ENCODE measurements at regions of chr1 and their contacts with region 1.

Region 1: GRCh38 chr1:31548907-31549808 is 27.2 kb upstream of the TINAGL1 start:
- DNase-seq: peak; percentile 84
- ATAC-seq: peak; percentile 95
- H3K4me3 ChIP-seq: peak overlapping the region; percentile 35 to 53
- H3K27ac ChIP-seq: peak overlapping the region; percentile 3; the same call in 1 of the 2 replicates
- H3K4me1 ChIP-seq: peaks cover 3% of the 10 kb centered on the region; the same call in 1 of the 2 replicates
- H3K27me3 ChIP-seq: no peaks in the 10 kb centered on the region
- CTCF ChIP-seq: peak; percentile 95

Region 2: DNA sequence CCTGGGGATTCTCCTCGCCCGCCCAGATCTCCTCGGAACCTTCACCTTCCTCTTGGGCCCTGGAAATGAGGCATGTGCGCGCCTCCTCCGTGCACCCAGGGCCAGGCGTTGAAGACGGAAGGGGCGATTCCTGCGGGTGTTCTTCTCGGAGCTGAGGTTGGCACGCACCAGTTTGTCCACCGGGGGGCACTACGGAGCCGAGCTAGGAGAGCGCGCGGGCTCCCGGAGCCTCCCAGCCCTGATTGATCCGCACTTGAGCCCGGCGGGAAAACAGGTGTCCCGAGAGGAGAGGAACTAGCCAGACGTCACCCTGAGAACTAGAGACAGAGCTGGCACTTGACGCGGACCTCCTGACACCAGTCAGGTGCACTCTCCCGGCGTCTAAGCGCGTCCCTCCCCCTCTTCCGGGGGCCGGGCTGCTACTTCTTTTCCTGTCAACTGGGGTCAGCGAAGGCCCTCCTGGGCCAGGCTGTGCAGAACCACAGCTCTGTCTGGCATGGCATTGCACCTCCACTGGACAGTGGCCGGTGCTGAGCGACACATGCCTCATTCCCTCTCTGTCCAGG is 154.4 kb before region 1 on chr1:
- CTCF ChIA-PET with region 1: interaction called, 17 read pairs
- POLR2A ChIA-PET with region 1: no interaction called
- in situ Hi-C with region 1: no loop called
- intact Hi-C with region 1: loop called (anchors 2 kb)
- DNase-seq: peak; percentile 55
- ATAC-seq: peak; percentile 94
- H3K4me3 ChIP-seq: peak overlapping the region; percentile 33 to 61
- H3K27ac ChIP-seq: no peak overlapping the region
- H3K4me1 ChIP-seq: peaks cover 4% of the 10 kb centered on the region; the same call in 1 of the 2 replicates
- H3K27me3 ChIP-seq: no peaks in the 10 kb centered on the region
- CTCF ChIP-seq: peak; percentile 96

Region 3: GRCh38 chr1:31422505-31423319 is 126.4 kb before region 1 on chr1:
- CTCF ChIA-PET with region 1: interaction called, 11 read pairs
- POLR2A ChIA-PET with region 1: no interaction called
- in situ Hi-C with region 1: no loop called
- intact Hi-C with region 1: no loop called
- DNase-seq: peak; percentile 91
- ATAC-seq: peak; percentile 87
- H3K4me3 ChIP-seq: no peak overlapping the region
- H3K27ac ChIP-seq: peak overlapping the region; percentile 32; the same call in 1 of the 2 replicates
- H3K4me1 ChIP-seq: peaks cover 9% of the 10 kb centered on the region
- H3K27me3 ChIP-seq: no peaks in the 10 kb centered on the region
- CTCF ChIP-seq: peak; percentile 97